PC-9 (cell line): ENCODE measurements at regions of chr19 and their contacts with region 1.

Region 1: DNA sequence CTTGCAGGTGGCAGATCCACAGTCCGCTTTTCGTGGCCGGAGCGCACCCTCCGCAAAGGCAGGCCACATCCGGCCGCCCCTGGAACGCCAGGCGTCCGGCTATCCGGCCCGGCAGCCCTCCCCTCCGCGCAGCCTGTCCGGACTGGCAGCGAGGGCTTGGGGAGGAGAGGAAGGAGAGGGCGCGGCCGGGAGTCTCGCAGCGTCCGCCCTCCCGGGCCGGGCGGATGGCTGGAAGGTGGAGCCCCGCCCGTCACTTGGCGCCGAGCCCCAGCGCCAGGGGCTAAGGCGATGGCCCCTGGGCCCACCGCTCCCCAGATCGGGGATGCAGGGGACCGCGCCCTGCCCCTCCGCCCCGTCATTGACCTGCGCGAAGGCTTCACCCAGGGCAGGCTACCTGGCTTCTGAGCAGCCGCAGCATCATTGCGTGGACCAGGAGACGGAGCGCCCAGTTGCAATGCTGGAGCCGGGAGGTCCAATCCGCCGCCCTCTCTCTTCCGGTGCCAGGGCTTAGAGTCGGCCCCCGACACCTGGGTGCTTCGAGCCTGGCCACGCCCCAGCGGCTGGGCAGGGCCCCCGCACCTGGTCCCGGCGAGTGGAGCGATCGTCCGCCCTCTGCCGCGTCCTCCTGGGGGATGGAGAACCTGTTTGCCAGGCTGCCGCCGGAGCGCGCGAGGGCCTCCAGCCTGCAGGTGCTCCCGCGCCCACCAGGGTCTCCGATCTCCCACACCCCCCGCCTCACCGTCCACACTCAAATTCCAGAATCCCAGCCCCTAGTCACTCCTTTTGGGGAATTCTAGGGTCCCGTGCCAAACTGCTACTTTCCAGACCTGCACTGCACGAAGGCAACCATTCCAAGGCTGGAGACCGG is at the start of gene FUT1:
- DNase-seq: peak; percentile 95 to 98
- H3K4me3 ChIP-seq: peak within 1 kb of the TSS; percentile 78
- H3K27ac ChIP-seq: peak within 1 kb of the TSS; percentile 66
- H3K4me1 ChIP-seq: peaks cover 41% of the 10 kb centered on the region
- H3K27me3 ChIP-seq: no peaks in the 10 kb centered on the region
- CTCF ChIP-seq: peak; percentile 66
- total RNA-seq, gene FUT1: 7.9 and 9.6 TPM in 2 replicates

Region 2: DNA sequence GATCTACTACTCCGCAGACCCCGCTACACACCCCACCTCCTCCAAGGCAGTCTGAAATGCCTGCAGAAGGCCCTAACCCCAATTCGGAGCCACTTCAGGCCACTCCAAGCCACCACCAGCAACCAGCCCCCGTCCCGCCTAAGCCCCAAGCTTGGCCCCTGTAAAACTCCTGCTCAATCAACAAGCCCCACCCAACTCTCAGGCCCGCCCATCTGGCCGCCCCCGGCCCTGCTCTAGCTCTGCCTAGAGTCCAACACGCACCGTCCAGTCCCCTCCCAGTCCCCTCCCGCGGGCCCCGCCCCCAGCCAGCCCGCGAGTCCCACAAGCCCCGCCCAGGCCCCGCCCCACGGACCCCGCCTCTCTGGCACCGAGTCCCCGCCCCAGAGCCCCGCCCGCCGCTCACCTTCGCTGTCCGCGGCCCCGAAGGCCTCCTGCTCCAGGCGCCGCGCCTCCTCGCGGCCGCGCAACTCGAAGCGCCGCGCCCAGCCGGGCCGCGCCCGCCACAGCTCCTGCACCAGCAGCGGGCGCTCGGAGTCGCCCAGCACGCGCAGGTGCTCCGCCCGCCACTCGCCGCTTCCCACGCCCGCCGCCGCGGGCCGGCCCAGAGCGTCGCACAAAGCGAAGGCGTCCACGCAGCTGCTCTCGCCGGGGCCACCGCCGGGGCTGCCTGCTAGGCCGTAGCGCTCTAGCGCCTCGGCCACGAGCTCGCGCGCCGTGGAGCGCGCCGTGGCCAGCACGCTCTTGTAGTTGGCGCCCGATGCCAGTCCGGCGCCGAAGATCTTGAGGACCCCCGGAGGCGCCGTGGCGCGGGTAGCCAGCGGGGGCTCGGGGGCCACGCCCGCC is 14.0 kb before region 1 on chr19:
- CTCF ChIA-PET with region 1: no interaction called
- POLR2A ChIA-PET with region 1: no interaction called
- intact Hi-C with region 1: loop called (anchors 2 kb)
- DNase-seq: peak; percentile 74 to 96
- H3K4me3 ChIP-seq: peak overlapping the region; percentile 58; the same call in 1 of the 2 replicates
- H3K27ac ChIP-seq: no peak overlapping the region
- H3K4me1 ChIP-seq: no peaks in the 10 kb centered on the region; the same call in 1 of the 2 replicates
- H3K27me3 ChIP-seq: no peaks in the 10 kb centered on the region
- CTCF ChIP-seq: no peak